ENCODE measurements at regions of chr4 and their contacts with region 1.

Region 1: GRCh38 chr4:139453371-139454110 is 380 bp upstream of the RAB33B start:
- DNase-seq: peak; percentile 86 to 96
- H3K4me3 ChIP-seq: peak overlapping the region; percentile 90
- H3K27ac ChIP-seq: peak overlapping the region; percentile 79
- H3K4me1 ChIP-seq: peaks cover 38% of the 10 kb centered on the region
- H3K27me3 ChIP-seq: no peaks in the 10 kb centered on the region
- CTCF ChIP-seq: peak; percentile 16; the same call in 1 of the 2 replicates

Region 2: GRCh38 chr4:139177868-139178611 is 275.5 kb before region 1 on chr4:
- CTCF ChIA-PET with region 1: no interaction called
- POLR2A ChIA-PET with region 1: interaction called, 5 read pairs
- intact Hi-C with region 1: loop called (anchors 2 kb)
- DNase-seq: peak; percentile 69 to 97
- H3K4me3 ChIP-seq: peak overlapping the region; percentile 83
- H3K27ac ChIP-seq: peak overlapping the region; percentile 21
- H3K4me1 ChIP-seq: peaks cover 11% of the 10 kb centered on the region
- H3K27me3 ChIP-seq: no peaks in the 10 kb centered on the region
- CTCF ChIP-seq: no peak

Region 3: DNA sequence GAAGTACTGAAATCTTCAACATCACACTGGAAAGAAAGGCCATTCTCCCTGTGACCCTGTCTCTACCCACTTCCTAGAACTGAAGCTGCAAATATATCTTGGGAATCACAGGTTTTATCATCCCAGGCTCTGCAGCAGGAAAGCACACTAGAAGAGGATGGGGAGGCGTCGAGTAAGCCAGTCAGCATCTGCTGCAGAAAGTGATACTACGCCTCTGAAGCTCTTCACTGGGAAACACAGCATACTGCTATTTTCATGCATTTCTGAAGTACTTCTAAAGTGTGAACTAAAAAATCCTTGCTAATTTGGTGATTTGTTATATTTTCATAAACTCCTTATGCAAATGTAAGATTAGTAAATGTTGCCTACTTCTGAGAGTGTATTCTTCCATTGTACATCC is 29.5 kb after region 1 on chr4:
- CTCF ChIA-PET with region 1: interaction called, 17 read pairs
- POLR2A ChIA-PET with region 1: interaction called, 4 read pairs
- intact Hi-C with region 1: no loop called
- DNase-seq: no peak
- H3K4me3 ChIP-seq: no peak overlapping the region
- H3K27ac ChIP-seq: no peak overlapping the region
- H3K4me1 ChIP-seq: no peaks in the 10 kb centered on the region
- H3K27me3 ChIP-seq: no peaks in the 10 kb centered on the region
- CTCF ChIP-seq: no peak

Region 4: GRCh38 chr4:139554893-139555704 is 101.6 kb after region 1 on chr4:
- CTCF ChIA-PET with region 1: no interaction called
- POLR2A ChIA-PET with region 1: interaction called, 9 read pairs
- intact Hi-C with region 1: loop called (anchors 1 kb)
- DNase-seq: peak; percentile 62 to 88
- H3K4me3 ChIP-seq: peak overlapping the region; percentile 87
- H3K27ac ChIP-seq: peak overlapping the region; percentile 67
- H3K4me1 ChIP-seq: peaks cover 27% of the 10 kb centered on the region
- H3K27me3 ChIP-seq: no peaks in the 10 kb centered on the region
- CTCF ChIP-seq: no peak